Activated CD4-positive, alpha-beta T cell treated with anti-CD3 and anti-CD28 coated beads for 36 hours (primary cell): ENCODE measurements at regions of chr4 and their contacts with region 1.

Region 1: GRCh38 chr4:108080747-108081146 is 88.0 kb downstream of the LEF1 start:
- DNase-seq: peak; percentile 70
- ATAC-seq: peak; percentile 75
- H3K4me3 Mint-ChIP-seq: peak overlapping the region; percentile 67
- H3K27ac Mint-ChIP-seq: peak overlapping the region; percentile 92
- H3K4me1 Mint-ChIP-seq: peaks cover 74% of the 10 kb centered on the region
- H3K27me3 Mint-ChIP-seq: no peaks in the 10 kb centered on the region

Region 2: DNA sequence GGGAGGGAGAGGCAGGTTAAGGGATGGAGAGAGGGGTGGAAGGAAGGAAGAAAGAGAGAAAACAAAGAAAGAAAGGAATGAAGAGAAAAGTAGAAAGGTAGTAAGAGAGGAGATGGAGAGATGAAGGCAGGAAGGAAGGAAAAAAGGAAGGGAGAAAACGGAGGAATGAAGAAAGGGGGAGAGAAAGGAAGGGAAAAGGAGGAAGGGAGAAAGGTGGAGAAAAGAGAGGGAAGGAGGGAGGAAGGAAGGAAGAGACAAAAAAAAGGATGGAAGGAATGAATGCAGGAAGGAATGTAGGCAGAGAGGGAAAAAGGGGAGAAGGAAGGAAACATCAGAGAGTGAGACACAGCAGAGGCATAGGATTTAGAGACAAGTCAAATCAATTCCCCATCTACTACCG is 1112.9 kb before region 1 on chr4:
- CTCF ChIA-PET with region 1: no interaction called
- POLR2A ChIA-PET with region 1: no interaction called
- intact Hi-C with region 1: no loop called
- DNase-seq: no peak
- ATAC-seq: no peak
- H3K4me3 Mint-ChIP-seq: no peak overlapping the region
- H3K27ac Mint-ChIP-seq: no peak overlapping the region
- H3K4me1 Mint-ChIP-seq: no peaks in the 10 kb centered on the region
- H3K27me3 Mint-ChIP-seq: no peaks in the 10 kb centered on the region

Region 3: DNA sequence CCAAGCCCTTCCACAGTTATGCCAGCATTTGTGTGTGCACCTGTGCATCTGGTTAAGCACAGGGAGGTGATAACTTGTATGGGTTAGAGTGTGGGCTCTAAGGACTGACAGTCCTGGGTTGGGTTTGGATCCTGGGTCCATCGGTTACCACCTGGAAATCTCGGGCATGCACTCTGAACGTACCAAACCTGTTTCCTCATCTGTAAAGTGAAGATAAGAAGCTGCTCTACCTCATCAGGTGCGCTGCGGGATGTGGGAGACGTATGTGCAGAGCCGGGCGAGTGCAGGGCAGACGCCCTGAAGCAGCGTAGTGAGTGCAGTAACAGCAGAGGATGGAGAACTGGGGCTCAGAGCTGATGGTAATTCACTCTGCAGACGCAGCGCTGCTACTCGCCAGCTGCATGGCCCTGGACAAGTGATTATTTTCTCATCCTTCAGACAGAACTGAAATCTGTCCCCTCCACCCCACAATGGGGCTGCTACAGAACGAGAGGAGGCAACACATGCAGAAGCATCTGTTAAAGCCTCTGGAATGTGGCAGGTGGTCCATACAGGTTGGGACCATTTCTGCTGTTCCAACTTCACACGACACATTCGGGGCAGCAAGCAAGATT is 26.6 kb before region 1 on chr4:
- CTCF ChIA-PET with region 1: interaction called, 6 read pairs
- POLR2A ChIA-PET with region 1: no interaction called
- intact Hi-C with region 1: loop called in 1 of 2 experiments (anchors 2 kb)
- DNase-seq: peak; percentile 42
- ATAC-seq: no peak
- H3K4me3 Mint-ChIP-seq: no peak overlapping the region
- H3K27ac Mint-ChIP-seq: peak overlapping the region; percentile 72
- H3K4me1 Mint-ChIP-seq: peaks cover 95% of the 10 kb centered on the region
- H3K27me3 Mint-ChIP-seq: no peaks in the 10 kb centered on the region

Region 4: GRCh38 chr4:108094923-108095482 is 14.3 kb after region 1 on chr4:
- CTCF ChIA-PET with region 1: interaction called, 13 read pairs
- POLR2A ChIA-PET with region 1: interaction called, 4 read pairs
- intact Hi-C with region 1: no loop called
- DNase-seq: no peak
- ATAC-seq: peak; percentile 45
- H3K4me3 Mint-ChIP-seq: no peak overlapping the region
- H3K27ac Mint-ChIP-seq: peak overlapping the region; percentile 81
- H3K4me1 Mint-ChIP-seq: peaks cover 86% of the 10 kb centered on the region
- H3K27me3 Mint-ChIP-seq: no peaks in the 10 kb centered on the region

Region 5: DNA sequence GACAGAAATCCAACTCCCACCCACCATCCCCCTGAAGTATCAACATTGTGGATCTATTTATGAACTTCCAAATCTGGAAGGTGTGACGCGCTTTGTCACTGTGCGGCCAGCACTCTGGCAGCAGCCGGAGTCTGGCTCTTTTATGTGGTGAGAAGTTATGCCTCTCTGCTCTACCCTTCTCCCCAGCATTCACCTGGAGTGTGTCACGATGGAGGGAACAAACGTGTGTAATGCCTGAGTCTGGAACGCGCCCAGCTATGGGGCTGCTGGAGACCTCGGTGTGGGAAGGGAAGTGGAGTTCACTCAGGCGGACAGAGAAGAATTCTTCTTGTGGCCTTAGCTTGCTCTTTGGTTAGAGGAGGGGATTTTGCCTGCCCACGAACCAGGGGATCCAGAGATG is 317.6 kb after region 1 on chr4:
- CTCF ChIA-PET with region 1: no interaction called
- POLR2A ChIA-PET with region 1: no interaction called
- intact Hi-C with region 1: no loop called
- DNase-seq: peak; percentile 10
- ATAC-seq: no peak
- H3K4me3 Mint-ChIP-seq: no peak overlapping the region
- H3K27ac Mint-ChIP-seq: no peak overlapping the region
- H3K4me1 Mint-ChIP-seq: peaks cover 9% of the 10 kb centered on the region
- H3K27me3 Mint-ChIP-seq: no peaks in the 10 kb centered on the region